Mammary epithelial cell (primary cell): ENCODE measurements at regions of chrX and their contacts with region 1.

Region 1: GRCh38 chrX:70030301-70030767 is 19.4 kb downstream of the AWAT2 start:
- DNase-seq: peak; percentile 51
- H3K4me3 ChIP-seq: no peak overlapping the region
- H3K27ac ChIP-seq: no peak overlapping the region
- H3K4me1 ChIP-seq: peaks cover 13% of the 10 kb centered on the region
- H3K27me3 ChIP-seq: no peaks in the 10 kb centered on the region
- CTCF ChIP-seq: peak; percentile 81 to 88

Region 2: DNA sequence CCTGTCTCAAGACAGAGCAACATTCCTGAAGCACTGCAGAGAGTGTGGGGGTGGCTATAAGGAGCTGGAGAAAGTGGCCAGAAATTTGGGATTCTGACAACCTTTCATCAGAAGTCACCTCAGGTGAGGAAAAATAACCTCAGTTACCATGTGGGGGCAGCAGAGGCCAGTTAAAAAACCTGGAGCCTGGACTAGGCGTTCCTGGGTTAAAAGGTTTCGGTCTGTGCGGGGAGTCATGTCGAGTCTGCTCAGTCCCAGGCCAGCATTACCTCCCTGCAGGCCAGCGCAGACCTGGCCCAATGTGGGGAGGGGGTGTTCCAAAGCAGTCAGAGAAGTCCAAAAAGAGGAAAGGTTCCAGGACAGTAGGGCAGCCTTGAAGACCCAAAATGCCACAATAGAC is 537.1 kb before region 1 on chrX:
- CTCF ChIA-PET with region 1: no interaction called
- dilution Hi-C with region 1: no loop called
- in situ Hi-C with region 1: no loop called
- intact Hi-C with region 1: loop called (anchors 1 kb)
- DNase-seq: peak; percentile 20
- H3K4me3 ChIP-seq: no peak overlapping the region
- H3K27ac ChIP-seq: no peak overlapping the region
- H3K4me1 ChIP-seq: peaks cover 5% of the 10 kb centered on the region
- H3K27me3 ChIP-seq: no peaks in the 10 kb centered on the region
- CTCF ChIP-seq: peak; percentile 44 to 49

Region 3: GRCh38 chrX:69538321-69538876 is 491.9 kb before region 1 on chrX:
- CTCF ChIA-PET with region 1: interaction called, 3 read pairs
- dilution Hi-C with region 1: no loop called
- in situ Hi-C with region 1: no loop called
- intact Hi-C with region 1: loop called (anchors 1 kb)
- DNase-seq: peak; percentile 14
- H3K4me3 ChIP-seq: peak overlapping the region; percentile 28 to 54 (median 43)
- H3K27ac ChIP-seq: no peak overlapping the region
- H3K4me1 ChIP-seq: peaks cover 3% of the 10 kb centered on the region
- H3K27me3 ChIP-seq: no peaks in the 10 kb centered on the region
- CTCF ChIP-seq: peak; percentile 54 to 76

Region 4: GRCh38 chrX:69961365-69962072 is 68.8 kb before region 1 on chrX:
- CTCF ChIA-PET with region 1: no interaction called
- dilution Hi-C with region 1: no loop called
- in situ Hi-C with region 1: no loop called
- intact Hi-C with region 1: no loop called
- DNase-seq: peak; percentile 12
- H3K4me3 ChIP-seq: no peak overlapping the region
- H3K27ac ChIP-seq: no peak overlapping the region
- H3K4me1 ChIP-seq: no peaks in the 10 kb centered on the region
- H3K27me3 ChIP-seq: no peaks in the 10 kb centered on the region
- CTCF ChIP-seq: no peak

Region 5: GRCh38 chrX:70117713-70118112 is 87.4 kb after region 1 on chrX:
- CTCF ChIA-PET with region 1: no interaction called
- dilution Hi-C with region 1: no loop called
- in situ Hi-C with region 1: no loop called
- intact Hi-C with region 1: no loop called
- DNase-seq: peak; percentile 59
- H3K4me3 ChIP-seq: no peak overlapping the region
- H3K27ac ChIP-seq: no peak overlapping the region
- H3K4me1 ChIP-seq: no peaks in the 10 kb centered on the region
- H3K27me3 ChIP-seq: no peaks in the 10 kb centered on the region
- CTCF ChIP-seq: peak in 1 of 2 donors; percentile 9

Region 6: DNA sequence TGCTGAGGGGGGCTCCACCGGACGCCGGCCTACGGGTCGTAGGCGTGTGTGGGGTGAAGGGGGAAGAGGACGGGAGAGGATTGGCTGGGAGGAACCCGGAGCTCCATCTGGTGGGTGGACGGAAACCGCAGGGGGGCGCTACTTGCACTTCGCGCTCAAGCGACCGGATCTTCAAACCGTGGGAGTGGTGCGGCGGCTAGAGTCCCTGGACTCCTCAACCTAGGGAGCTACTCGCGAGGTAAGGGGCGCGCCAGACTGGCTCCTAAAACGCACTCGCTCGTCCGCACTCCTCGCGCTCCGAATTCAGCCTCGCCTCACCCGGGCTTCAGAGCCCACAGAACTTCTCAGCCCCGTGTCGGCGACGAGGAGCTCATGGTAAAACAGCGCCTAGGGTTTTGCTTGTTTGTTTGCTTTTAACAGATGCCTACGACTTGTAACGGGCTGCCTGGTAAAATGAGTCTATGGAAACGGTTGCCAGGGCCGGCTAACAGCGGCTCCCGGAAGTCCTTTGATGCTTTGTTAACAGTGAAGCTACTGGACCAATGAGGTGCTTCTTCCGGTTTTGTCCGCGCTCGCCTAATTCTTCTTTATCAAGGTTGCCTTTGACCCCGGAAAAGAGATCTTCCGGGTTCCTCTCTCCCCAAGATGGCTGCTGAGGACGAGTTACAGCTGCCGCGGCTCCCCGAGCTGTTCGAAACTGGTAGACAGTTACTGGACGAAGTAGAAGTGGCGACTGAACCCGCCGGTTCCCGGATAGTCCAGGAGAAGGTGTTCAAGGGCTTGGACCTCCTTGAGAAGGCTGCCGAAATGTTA is 103.2 kb after region 1 on chrX and contains the start of gene IGBP1:
- CTCF ChIA-PET with region 1: interaction called, 3 read pairs
- dilution Hi-C with region 1: no loop called
- in situ Hi-C with region 1: no loop called
- intact Hi-C with region 1: loop called (anchors 1 kb)
- DNase-seq: peak; percentile 79
- H3K4me3 ChIP-seq: peak within 1 kb of the TSS; percentile 59 to 82 (median 68)
- H3K27ac ChIP-seq: peak within 1 kb of the TSS; percentile 89
- H3K4me1 ChIP-seq: peaks cover 18% of the 10 kb centered on the region
- H3K27me3 ChIP-seq: no peaks in the 10 kb centered on the region
- CTCF ChIP-seq: peak; percentile 49 to 62
- total RNA-seq, gene IGBP1: 31.1 to 67.3 TPM